ENCODE measurements at regions of chr5 and their contacts with region 1.

Region 1: GRCh38 chr5:54140247-54140840 is 170.0 kb downstream of the ARL15 start:
- DNase-seq: no peak
- ATAC-seq: no peak
- H3K4me3 ChIP-seq: no peak overlapping the region
- H3K27ac ChIP-seq: no peak overlapping the region
- H3K4me1 ChIP-seq: no peaks in the 10 kb centered on the region
- H3K27me3 ChIP-seq: no peaks in the 10 kb centered on the region
- CTCF ChIP-seq: no peak

Region 2: DNA sequence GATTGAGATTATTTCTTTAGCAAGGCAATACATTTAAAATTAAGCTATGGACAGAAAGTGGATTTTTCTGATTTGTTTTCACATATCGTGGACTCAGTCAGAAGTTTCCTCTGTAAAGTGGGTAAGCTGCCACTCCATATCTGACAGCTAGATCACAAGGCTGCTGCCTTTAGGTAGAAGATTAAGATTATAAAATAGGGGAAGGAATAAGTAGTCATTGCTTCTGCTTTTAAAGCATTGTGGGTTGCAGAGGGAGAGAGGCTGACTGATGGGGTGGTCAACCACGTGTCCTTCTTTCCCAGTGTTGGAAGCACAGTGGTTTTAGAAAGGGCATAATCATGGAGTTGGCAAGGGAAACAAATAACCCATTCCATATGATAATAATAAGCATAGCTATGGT is 956.5 kb before region 1 on chr5:
- intact Hi-C with region 1: loop called in 1 of 2 experiments (anchors 2 kb)
- DNase-seq: no peak
- ATAC-seq: no peak
- H3K4me3 ChIP-seq: no peak overlapping the region
- H3K27ac ChIP-seq: no peak overlapping the region
- H3K4me1 ChIP-seq: no peaks in the 10 kb centered on the region
- H3K27me3 ChIP-seq: no peaks in the 10 kb centered on the region
- CTCF ChIP-seq: no peak